A673 (cell line): ENCODE measurements at regions of chr1 and their contacts with region 1.

Region 1: GRCh38 chr1:145858894-145859490 is at the start of gene PIAS3:
- DNase-seq: peak; percentile 96
- H3K4me3 ChIP-seq: peak within 1 kb of the TSS; percentile 91
- H3K27ac ChIP-seq: peak within 1 kb of the TSS; percentile 78
- H3K4me1 ChIP-seq: peaks cover 9% of the 10 kb centered on the region
- H3K27me3 ChIP-seq: no peaks in the 10 kb centered on the region
- CTCF ChIP-seq: no peak
- total RNA-seq, gene PIAS3: 41.8 and 47.0 TPM in 2 replicates

Region 2: GRCh38 chr1:145845514-145846161 is 13.4 kb before region 1 on chr1 and contains the start of gene NUDT17:
- CTCF ChIA-PET with region 1: interaction called, 25 read pairs
- POLR2A ChIA-PET with region 1: no interaction called
- intact Hi-C with region 1: no loop called
- DNase-seq: peak; percentile 88
- H3K4me3 ChIP-seq: peak within 1 kb of the TSS; percentile 74
- H3K27ac ChIP-seq: peak within 1 kb of the TSS; percentile 85
- H3K4me1 ChIP-seq: peaks cover 12% of the 10 kb centered on the region
- H3K27me3 ChIP-seq: no peaks in the 10 kb centered on the region
- CTCF ChIP-seq: peak; percentile 98
- total RNA-seq, gene NUDT17: 3.4 and 6.6 TPM in 2 replicates

Region 3: DNA sequence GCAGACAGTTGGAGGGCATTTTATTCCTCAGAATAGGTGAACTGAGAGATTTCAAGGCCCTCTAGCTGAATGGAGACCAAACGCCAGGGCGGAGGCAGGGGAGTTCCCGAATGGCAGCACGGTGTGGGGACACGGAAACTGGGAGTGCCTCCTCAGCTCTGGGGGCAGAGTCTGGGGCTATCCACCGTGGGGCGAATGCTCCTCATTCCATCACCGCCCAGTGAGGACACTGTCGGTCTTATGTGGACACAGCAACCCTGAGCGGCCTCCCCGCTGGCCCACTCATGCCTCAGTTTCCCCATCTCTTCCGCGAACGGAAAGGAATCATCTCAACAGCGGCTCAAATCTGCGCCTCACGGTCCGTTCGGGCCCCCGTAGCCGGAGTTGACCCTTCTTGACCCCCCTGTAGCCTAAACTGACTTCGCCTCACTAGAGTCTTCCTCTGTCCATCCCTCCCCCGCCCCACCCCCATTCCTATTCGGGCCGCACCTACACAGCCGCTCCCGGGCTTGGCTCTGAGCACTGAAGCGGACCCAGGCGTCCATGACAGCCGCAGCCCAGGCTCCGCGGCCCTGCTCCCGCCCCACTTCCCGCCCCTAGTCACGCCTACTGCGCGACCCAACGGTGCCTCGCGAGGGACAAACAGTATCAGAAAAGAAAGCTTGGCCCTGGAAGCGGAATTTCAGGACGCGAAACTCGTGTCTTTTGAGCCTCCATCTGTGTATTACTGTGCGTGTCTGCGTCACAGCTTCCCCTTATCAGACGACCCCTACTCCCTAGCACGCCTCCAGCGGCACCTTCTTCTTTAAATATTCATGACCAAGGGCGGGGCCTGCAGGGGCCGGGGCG is 59.4 kb after region 1 on chr1 and contains the start of gene PEX11B:
- CTCF ChIA-PET with region 1: no interaction called
- POLR2A ChIA-PET with region 1: no interaction called
- intact Hi-C with region 1: loop called (anchors 2 kb)
- DNase-seq: peak; percentile 94
- H3K4me3 ChIP-seq: peak within 1 kb of the TSS; percentile 78
- H3K27ac ChIP-seq: peak within 1 kb of the TSS; percentile 94
- H3K4me1 ChIP-seq: peaks cover 16% of the 10 kb centered on the region
- H3K27me3 ChIP-seq: no peaks in the 10 kb centered on the region
- CTCF ChIP-seq: no peak
- total RNA-seq, gene PEX11B: 22.1 and 22.4 TPM in 2 replicates

Region 4: GRCh38 chr1:145957443-145958319 is 98.7 kb after region 1 on chr1 and contains the start of gene LIX1L:
- CTCF ChIA-PET with region 1: no interaction called
- POLR2A ChIA-PET with region 1: no interaction called
- intact Hi-C with region 1: loop called (anchors 5 kb)
- DNase-seq: peak; percentile 99
- H3K4me3 ChIP-seq: peak within 1 kb of the TSS; percentile 69
- H3K27ac ChIP-seq: peak within 1 kb of the TSS; percentile 90
- H3K4me1 ChIP-seq: peaks cover 43% of the 10 kb centered on the region
- H3K27me3 ChIP-seq: no peaks in the 10 kb centered on the region
- CTCF ChIP-seq: no peak
- total RNA-seq, gene LIX1L: 39.6 and 40.1 TPM in 2 replicates